Gastrocnemius medialis (tissue), 4 donors: ENCODE measurements at regions of chr18 and their contacts with region 1.

Region 1: GRCh38 chr18:44679056-44679905 is 1.4 kb upstream of the SETBP1 start:
- DNase-seq: peak; percentile 84 to 87
- ATAC-seq: peak; percentile 75 to 79
- H3K4me3 ChIP-seq: peak overlapping the region; percentile 58 to 83 (median 79)
- H3K27ac ChIP-seq: peak overlapping the region; percentile 86 to 100 (median 96)
- H3K4me1 ChIP-seq: peaks cover 29 to 32% of the 10 kb centered on the region in 2 donors
- H3K27me3 ChIP-seq: no peaks in the 10 kb centered on the region
- CTCF ChIP-seq: peak; percentile 34 to 73 (median 70)
- POLR2A ChIP-seq: peak; percentile 89 to 91

Region 2: GRCh38 chr18:44548291-44549221 is 130.7 kb before region 1 on chr18:
- in situ Hi-C with region 1: no loop called
- intact Hi-C with region 1: no loop called
- DNase-seq: no peak
- ATAC-seq: peak in 1 of 2 donors; percentile 21
- H3K4me3 ChIP-seq: no peak overlapping the region
- H3K27ac ChIP-seq: no peak overlapping the region
- H3K4me1 ChIP-seq: no peaks in the 10 kb centered on the region
- H3K27me3 ChIP-seq: no peaks in the 10 kb centered on the region
- CTCF ChIP-seq: no peak
- POLR2A ChIP-seq: no peak

Region 3: GRCh38 chr18:44744161-44745121 is 65.2 kb after region 1 on chr18:
- in situ Hi-C with region 1: no loop called
- intact Hi-C with region 1: loop called (anchors 1 kb)
- DNase-seq: peak in 1 of 2 donors; percentile 68
- ATAC-seq: peak; percentile 67 to 71
- H3K4me3 ChIP-seq: peak overlapping the region; percentile 28 to 40 (median 36)
- H3K27ac ChIP-seq: peak overlapping the region; percentile 7 to 53 (median 21)
- H3K4me1 ChIP-seq: peaks cover 54 to 59% of the 10 kb centered on the region in 2 donors
- H3K27me3 ChIP-seq: no peaks in the 10 kb centered on the region
- CTCF ChIP-seq: peak in 3 of 5 experiments; percentile 13 to 29 (median 20)
- POLR2A ChIP-seq: no peak

Region 4: DNA sequence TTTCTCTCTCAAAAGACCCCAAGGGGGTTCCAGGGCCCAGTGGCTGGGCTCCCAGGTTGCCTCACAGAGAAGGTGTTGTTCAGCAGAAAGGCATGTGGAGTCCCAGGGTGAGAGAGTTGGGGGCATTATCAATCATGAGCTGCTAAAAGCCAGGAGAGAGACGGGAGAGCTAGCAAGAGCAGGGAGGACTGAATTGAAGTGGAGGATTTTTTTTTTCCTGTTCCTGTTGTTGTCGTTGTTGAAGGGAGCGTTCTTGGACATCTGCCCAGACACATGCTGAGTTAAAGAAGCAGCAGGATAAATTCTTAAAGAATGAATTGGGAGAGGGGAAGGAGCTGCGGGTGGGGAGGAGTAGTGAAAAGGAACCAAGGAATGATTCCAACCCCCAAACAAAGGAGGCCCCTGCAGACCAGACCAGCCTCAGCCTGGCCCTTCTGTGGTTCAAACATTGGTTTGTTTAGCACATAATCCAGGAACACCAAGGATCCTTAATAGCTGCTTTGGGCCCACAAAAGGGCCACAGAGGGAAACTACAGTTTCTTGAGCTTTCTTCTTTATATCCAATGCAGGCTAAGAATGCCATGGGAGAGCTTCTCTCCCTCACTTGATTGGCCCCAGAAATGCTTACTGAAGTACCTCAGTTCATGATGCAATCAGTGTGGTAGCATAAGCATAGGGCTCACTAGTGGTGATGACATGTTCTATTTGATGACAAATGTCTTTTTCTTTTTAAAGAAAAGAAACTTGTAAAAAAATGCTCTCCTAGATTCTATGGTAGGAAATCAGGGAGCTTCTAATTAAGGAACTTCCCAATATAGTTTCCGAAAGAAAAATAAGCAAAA is 147.4 kb after region 1 on chr18:
- in situ Hi-C with region 1: no loop called
- intact Hi-C with region 1: loop called (anchors 5 kb)
- DNase-seq: peak; percentile 69 to 80
- ATAC-seq: peak; percentile 81 to 90
- H3K4me3 ChIP-seq: peak overlapping the region in 3 of 4 donors; percentile 0 to 10 (median 6)
- H3K27ac ChIP-seq: peak overlapping the region; percentile 69 to 85 (median 74)
- H3K4me1 ChIP-seq: peaks cover 52 to 57% of the 10 kb centered on the region in 2 donors
- H3K27me3 ChIP-seq: no peaks in the 10 kb centered on the region
- CTCF ChIP-seq: no peak
- POLR2A ChIP-seq: no peak

Region 5: DNA sequence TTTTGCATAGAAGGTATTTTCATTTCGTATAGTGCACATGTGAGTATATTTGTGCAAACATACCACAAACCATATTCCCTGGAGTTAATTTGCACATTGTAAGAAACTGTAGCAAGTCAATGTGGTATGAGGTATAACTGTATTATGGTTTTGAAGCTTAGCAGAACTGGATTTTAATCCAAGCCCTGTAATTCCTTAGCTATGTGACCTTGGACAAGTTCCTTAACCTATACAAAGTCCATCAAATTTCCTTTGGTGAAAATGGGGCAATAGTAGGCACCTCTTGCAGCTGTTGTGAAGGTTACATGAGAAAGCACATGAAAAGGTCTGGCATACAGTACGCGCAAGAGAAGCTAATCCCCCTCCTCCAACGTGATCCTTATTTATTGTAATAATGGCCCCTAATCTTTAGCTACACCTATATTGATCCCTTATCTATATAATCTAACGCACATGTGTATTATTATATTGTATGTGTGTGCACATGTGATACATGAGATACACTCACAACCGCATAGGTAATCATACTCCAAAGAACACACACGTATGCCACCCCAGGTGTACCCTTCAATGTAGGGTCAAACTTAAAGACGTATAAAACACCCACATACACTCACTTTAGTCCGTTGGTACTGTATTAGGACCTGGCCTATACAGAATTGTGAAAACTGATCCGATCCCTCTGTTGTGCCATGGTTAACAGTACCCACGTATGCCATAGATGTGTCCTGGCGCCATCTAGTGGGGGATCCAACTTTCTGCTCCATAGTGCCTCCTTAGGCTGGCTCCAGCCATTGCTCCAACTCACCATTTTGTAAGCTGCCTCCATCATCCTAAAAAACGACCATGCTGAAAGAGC is 533.1 kb after region 1 on chr18:
- in situ Hi-C with region 1: loop called (anchors 5 to 25 kb)
- intact Hi-C with region 1: loop called (anchors 1 kb)
- DNase-seq: peak; percentile 67 to 82
- ATAC-seq: peak; percentile 96 to 100
- H3K4me3 ChIP-seq: no peak overlapping the region
- H3K27ac ChIP-seq: no peak overlapping the region
- H3K4me1 ChIP-seq: no peaks in the 10 kb centered on the region
- H3K27me3 ChIP-seq: no peaks in the 10 kb centered on the region
- CTCF ChIP-seq: peak; percentile 75 to 93 (median 81)
- POLR2A ChIP-seq: no peak